ENCODE measurements at regions of chr1 and their contacts with region 1.

Region 1: DNA sequence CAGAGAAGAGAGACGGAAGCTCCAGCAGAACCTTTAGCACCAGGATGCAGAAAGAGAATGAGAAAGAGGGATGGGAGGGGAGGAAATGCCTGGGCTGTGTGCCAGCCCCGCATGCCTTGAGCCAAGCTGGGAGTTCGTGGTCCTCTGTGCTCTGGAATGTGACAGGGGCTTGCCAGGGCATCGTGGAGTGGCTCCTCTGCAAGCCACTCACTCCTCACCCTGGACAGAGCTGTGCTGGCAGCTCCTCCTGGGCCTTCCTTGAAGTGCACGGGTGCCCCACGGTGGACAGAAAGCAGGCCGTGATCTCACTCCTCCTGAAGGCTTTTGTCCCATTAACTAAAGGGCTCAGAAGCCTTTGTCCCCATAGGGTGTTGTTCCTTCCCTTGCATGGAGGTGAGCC is 34.8 kb upstream of the PRELP start:
- DNase-seq: no peak
- H3K4me3 ChIP-seq: no peak overlapping the region
- H3K27ac ChIP-seq: peak overlapping the region; percentile 86
- H3K4me1 ChIP-seq: peaks cover 32% of the 10 kb centered on the region
- H3K27me3 ChIP-seq: no peaks in the 10 kb centered on the region
- CTCF ChIP-seq: peak in 2 of 3 experiments; percentile 48
- POLR2A ChIP-seq: no peak

Region 2: DNA sequence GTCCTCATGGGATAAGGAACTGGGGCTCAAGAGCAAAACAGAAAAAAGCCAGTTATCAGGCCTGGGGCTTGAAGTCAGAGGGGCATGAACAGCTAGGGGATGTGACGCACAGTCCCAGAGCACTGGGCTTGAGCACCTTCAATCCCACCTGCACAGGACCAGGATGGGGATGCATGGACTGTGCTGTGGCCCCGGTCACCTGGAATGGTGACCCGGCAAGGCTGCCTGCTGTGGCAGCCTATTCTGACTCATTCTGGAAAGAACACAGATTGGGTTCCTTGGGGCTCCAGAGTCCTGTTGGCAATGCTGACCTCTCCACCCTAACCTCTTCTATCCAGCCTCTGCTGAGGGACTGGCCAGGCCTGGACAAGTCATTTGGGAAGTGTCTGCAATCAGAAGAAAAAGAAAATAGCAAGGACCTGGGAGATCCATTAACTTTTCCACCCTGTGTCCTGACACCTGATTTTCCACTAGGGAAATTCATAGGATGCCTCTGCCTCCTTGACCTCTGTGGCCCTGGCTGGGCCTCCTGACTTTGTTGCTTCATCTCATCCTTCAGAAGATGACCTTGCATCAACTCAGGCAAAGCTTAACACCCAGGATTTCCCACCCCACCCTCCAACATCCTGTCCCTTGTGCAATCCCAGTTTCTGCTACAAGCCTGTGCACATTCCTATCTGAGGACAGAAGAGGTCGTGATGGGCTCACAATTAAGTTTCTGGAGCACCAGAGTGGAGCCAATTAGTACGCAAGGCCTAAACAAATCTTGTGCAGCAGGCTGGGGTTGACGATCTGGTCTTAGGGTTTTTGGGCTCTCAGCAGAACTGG is 71.9 kb before region 1 on chr1:
- intact Hi-C with region 1: loop called (anchors 5 kb)
- DNase-seq: peak in 1 of 2 donors; percentile 98
- H3K4me3 ChIP-seq: no peak overlapping the region
- H3K27ac ChIP-seq: peak overlapping the region; percentile 77
- H3K4me1 ChIP-seq: peaks cover 17% of the 10 kb centered on the region
- H3K27me3 ChIP-seq: no peaks in the 10 kb centered on the region
- CTCF ChIP-seq: peak in 2 of 3 experiments; percentile 6 to 53
- POLR2A ChIP-seq: no peak

Region 3: GRCh38 chr1:203408486-203409427 is 32.0 kb before region 1 on chr1:
- intact Hi-C with region 1: loop called (anchors 5 kb)
- DNase-seq: peak in 1 of 2 donors; percentile 93
- H3K4me3 ChIP-seq: no peak overlapping the region
- H3K27ac ChIP-seq: peak overlapping the region; percentile 91
- H3K4me1 ChIP-seq: peaks cover 63% of the 10 kb centered on the region
- H3K27me3 ChIP-seq: no peaks in the 10 kb centered on the region
- CTCF ChIP-seq: no peak
- POLR2A ChIP-seq: no peak

Region 4: GRCh38 chr1:203486618-203487370 is 46.0 kb after region 1 on chr1:
- intact Hi-C with region 1: loop called (anchors 5 kb)
- DNase-seq: no peak
- H3K4me3 ChIP-seq: peak overlapping the region in 1 of 2 donors; percentile 25
- H3K27ac ChIP-seq: peak overlapping the region; percentile 88
- H3K4me1 ChIP-seq: peaks cover 52% of the 10 kb centered on the region
- H3K27me3 ChIP-seq: no peaks in the 10 kb centered on the region
- CTCF ChIP-seq: no peak
- POLR2A ChIP-seq: no peak

Region 5: GRCh38 chr1:203522237-203522636 is 81.5 kb after region 1 on chr1:
- intact Hi-C with region 1: no loop called
- DNase-seq: no peak
- H3K4me3 ChIP-seq: no peak overlapping the region
- H3K27ac ChIP-seq: no peak overlapping the region
- H3K4me1 ChIP-seq: peaks cover 34% of the 10 kb centered on the region
- H3K27me3 ChIP-seq: no peaks in the 10 kb centered on the region
- CTCF ChIP-seq: no peak
- POLR2A ChIP-seq: no peak

Region 6: DNA sequence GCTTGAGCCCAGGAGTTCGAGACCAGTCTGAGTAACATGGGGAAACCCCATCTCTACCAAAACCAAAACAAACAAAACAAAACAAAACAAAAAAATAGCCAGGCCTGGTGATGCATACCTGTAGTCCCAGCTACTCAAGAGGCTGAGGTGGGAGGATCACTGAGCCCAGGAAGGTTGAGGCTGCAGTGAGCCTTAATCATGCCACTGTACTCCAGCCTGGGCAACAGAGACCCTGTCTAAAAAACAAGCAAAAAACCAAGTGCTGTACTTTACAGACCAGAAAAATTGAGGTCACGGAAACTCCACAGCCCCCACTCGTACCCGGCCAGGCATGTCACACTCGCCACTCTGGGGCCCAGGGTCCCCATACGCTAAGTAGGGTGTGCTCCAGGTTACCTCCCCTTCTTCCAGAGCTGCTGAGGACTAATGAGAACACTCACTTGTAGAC is 208.8 kb after region 1 on chr1:
- intact Hi-C with region 1: no loop called
- DNase-seq: no peak
- H3K4me3 ChIP-seq: no peak overlapping the region
- H3K27ac ChIP-seq: peak overlapping the region; percentile 86
- H3K4me1 ChIP-seq: peaks cover 66% of the 10 kb centered on the region
- H3K27me3 ChIP-seq: no peaks in the 10 kb centered on the region
- CTCF ChIP-seq: no peak
- POLR2A ChIP-seq: no peak

Region 7: GRCh38 chr1:204989266-204990058 is 1548.7 kb after region 1 on chr1:
- intact Hi-C with region 1: no loop called
- DNase-seq: no peak
- H3K4me3 ChIP-seq: no peak overlapping the region
- H3K27ac ChIP-seq: no peak overlapping the region
- H3K4me1 ChIP-seq: no peaks in the 10 kb centered on the region
- H3K27me3 ChIP-seq: no peaks in the 10 kb centered on the region
- CTCF ChIP-seq: peak; percentile 64 to 78 (median 70)
- POLR2A ChIP-seq: no peak